Activated B cell treated with CpG ODN at 0.5 μM for 24 hours (primary cell): ENCODE measurements at regions of chr14 and their contacts with region 1.

Region 1: DNA sequence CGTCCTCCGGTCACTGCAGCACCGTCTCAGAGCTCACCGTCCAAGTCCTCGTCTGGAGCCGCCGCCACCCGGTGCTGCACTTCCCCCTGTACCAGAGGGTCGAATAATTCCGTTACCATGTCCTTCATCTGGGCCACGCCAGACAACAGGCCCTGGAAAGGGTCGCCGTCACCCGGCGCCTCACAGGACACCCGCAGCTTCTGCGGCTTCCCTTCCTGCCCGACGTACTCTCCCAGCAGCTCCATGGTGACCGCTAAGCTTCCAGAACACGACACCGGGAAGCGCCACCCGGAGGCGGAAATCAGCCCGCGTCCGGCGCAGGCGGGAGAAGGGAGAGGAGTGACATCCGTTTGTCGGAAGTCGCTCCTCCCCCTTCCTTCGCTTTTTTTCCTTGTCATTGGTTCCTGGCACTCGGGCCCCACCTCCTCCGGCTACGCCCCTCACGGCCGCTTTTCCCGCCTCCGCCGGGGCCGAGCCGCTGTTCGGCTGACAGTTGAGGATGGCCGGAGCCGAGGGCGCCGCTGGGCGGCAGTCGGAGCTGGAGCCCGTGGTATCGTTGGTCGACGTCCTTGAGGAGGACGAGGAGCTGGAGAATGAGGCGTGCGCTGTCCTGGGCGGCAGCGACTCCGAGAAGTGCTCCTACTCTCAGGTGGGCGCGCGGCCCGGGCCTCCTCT is at the starts of genes GON7 and UBR7:
- DNase-seq: peak; percentile 84
- ATAC-seq: peak; percentile 93
- H3K4me3 Mint-ChIP-seq: peak within 1 kb of the TSS; percentile 96
- H3K27ac Mint-ChIP-seq: peak within 1 kb of the TSS; percentile 90
- H3K4me1 Mint-ChIP-seq: peaks cover 56% of the 10 kb centered on the region
- H3K27me3 Mint-ChIP-seq: no peaks in the 10 kb centered on the region
- CTCF ChIP-seq: no peak
- total RNA-seq, gene GON7: 11.3 and 11.4 TPM in 2 replicates
- total RNA-seq, gene UBR7: 19.3 and 19.5 TPM in 2 replicates

Region 2: DNA sequence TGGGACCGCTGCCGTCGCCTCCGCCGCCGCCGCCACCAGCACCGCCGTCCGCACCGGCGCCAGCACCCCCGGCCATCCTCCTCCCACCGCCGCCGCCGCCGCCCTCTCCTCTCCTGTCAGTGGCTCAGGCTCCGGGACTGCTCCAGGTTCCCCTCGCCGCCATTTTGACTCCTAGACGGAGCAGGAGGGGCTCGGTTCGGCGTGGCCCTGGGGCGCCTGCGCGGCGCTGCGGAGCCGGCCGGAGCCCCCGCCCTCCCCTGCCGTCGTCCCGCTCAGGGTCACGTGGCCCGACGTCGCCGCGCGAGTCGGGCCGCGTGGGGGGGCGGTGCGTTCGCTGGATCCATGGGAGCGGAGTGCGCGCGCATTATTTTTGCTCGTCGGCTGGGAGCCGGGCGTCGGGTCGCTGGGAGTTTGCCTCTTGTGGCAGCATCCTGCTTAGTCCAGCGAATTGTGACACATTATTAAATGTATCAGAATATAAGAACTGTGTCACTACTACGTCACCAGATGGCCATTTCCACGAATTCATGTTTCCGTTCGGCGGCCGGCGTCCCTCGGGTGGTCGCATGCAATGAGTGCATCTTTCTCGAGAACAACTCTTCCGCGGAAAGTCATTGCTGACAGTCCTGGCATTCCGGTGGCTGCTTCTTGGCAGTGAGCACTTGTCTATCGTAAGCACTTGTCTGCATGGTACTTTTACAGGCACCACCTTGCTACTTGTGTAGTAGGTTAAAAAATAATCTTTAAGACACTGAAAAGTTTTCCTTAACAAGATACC is 126.1 kb after region 1 on chr14 and contains the start of gene BTBD7:
- CTCF ChIA-PET with region 1: no interaction called
- POLR2A ChIA-PET with region 1: no interaction called
- intact Hi-C with region 1: loop called (anchors 2 kb)
- DNase-seq: peak; percentile 94
- ATAC-seq: peak; percentile 91
- H3K4me3 Mint-ChIP-seq: peak within 1 kb of the TSS; percentile 95
- H3K27ac Mint-ChIP-seq: peak within 1 kb of the TSS; percentile 90
- H3K4me1 Mint-ChIP-seq: peaks cover 40% of the 10 kb centered on the region
- H3K27me3 Mint-ChIP-seq: no peaks in the 10 kb centered on the region
- CTCF ChIP-seq: no peak
- total RNA-seq, gene BTBD7: 34.4 and 41.2 TPM in 2 replicates

Region 3: GRCh38 chr14:93533472-93534241 is 326.7 kb after region 1 on chr14:
- CTCF ChIA-PET with region 1: interaction called, 10 read pairs
- POLR2A ChIA-PET with region 1: interaction called, 3 read pairs
- intact Hi-C with region 1: no loop called
- DNase-seq: no peak
- ATAC-seq: peak; percentile 79
- H3K4me3 Mint-ChIP-seq: peak overlapping the region; percentile 15
- H3K27ac Mint-ChIP-seq: no peak overlapping the region
- H3K4me1 Mint-ChIP-seq: peaks cover 30% of the 10 kb centered on the region
- H3K27me3 Mint-ChIP-seq: no peaks in the 10 kb centered on the region
- CTCF ChIP-seq: no peak

Region 4: GRCh38 chr14:93619176-93619793 is 412.4 kb after region 1 on chr14:
- CTCF ChIA-PET with region 1: interaction called, 8 read pairs
- POLR2A ChIA-PET with region 1: no interaction called
- intact Hi-C with region 1: loop called (anchors 1 kb)
- DNase-seq: no peak
- ATAC-seq: no peak
- H3K4me3 Mint-ChIP-seq: no peak overlapping the region
- H3K27ac Mint-ChIP-seq: no peak overlapping the region
- H3K4me1 Mint-ChIP-seq: no peaks in the 10 kb centered on the region
- H3K27me3 Mint-ChIP-seq: peaks cover 4% of the 10 kb centered on the region
- CTCF ChIP-seq: peak; percentile 46

Region 5: DNA sequence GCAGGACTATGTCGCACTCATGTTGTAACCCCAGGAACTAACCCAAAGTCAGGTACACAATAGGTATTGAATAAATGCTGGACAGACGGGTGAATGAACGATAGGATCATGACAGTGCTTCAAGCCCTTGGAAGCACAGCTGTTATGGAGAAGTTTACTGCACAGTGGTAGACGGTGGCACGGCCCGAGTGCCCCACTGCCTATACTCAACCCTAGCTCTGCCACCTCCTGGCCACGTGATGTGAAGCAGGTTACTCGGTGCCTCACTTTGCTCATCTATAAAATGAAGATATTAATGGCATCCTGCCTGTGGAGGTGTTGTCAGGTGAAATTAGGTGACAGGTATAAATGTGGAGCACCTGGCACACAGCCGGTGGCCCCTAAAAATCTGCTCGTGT is 763.6 kb after region 1 on chr14:
- CTCF ChIA-PET with region 1: no interaction called
- POLR2A ChIA-PET with region 1: no interaction called
- intact Hi-C with region 1: loop called (anchors 10 kb)
- DNase-seq: peak; percentile 42
- ATAC-seq: peak; percentile 51
- H3K4me3 Mint-ChIP-seq: peak overlapping the region; percentile 89
- H3K27ac Mint-ChIP-seq: peak overlapping the region; percentile 89
- H3K4me1 Mint-ChIP-seq: peaks cover 70% of the 10 kb centered on the region
- H3K27me3 Mint-ChIP-seq: peaks cover 8% of the 10 kb centered on the region
- CTCF ChIP-seq: no peak